ENCODE measurements at regions of chr3 and their contacts with region 1.

Region 1: DNA sequence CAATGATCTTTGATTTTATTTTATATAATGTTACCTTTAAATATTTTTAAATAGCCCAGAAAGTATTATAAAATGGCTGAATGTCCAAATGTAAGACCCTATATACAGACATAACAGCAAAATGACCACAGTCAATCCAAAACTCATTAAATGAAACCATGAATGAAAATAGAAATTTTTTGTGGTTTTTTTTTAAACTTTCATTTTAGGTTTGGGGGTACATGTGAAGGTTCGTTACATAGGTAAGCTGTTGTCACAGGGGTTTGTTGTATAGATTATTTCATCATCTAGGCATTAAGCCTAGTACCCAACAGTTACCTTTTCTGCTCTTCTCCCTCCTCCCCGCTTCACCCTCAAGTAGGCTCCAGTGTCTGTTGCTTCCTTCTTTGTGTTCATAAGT is 108.8 kb downstream of the FAIM start:
- DNase-seq: no peak
- H3K4me3 ChIP-seq: no peak overlapping the region
- H3K27ac ChIP-seq: no peak overlapping the region
- H3K4me1 ChIP-seq: no peaks in the 10 kb centered on the region
- H3K27me3 ChIP-seq: no peaks in the 10 kb centered on the region

Region 2: DNA sequence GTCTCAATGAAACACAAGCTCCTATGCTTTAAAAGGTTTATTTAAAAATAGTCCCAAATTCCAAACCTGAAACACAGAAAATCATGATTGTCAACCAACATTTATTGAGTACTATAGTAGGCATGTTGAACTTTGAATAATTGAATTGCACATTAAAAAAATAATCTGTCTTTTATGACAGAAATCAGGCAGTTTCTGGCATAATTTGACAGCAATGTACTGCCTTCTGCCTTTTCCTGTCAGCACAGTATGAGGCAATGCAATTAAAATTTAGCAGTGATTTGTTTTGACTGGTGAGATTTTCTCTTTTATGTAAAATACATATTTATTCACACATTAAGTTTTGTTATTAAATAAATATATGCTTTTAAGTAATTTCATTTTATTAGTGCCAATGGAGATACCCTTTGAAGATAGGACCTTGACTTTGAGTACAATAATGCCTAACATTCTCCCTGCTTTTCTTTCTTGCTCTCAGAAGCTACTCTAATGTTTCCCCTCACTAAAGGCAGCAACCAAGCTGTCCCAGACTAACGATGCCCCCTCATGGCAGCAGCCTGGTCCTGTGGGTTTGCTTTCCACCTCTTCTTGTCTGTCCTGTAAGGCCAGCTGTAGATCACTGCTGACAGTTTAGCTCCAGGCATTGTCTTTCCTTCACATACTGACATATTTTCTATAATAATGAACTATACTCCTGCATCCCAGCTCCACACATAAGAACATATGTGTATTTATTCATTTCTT is 1412.9 kb before region 1 on chr3:
- CTCF ChIA-PET with region 1: no interaction called
- POLR2A ChIA-PET with region 1: no interaction called
- DNase-seq: no peak
- H3K4me3 ChIP-seq: no peak overlapping the region
- H3K27ac ChIP-seq: no peak overlapping the region
- H3K4me1 ChIP-seq: no peaks in the 10 kb centered on the region
- H3K27me3 ChIP-seq: no peaks in the 10 kb centered on the region

Region 3: DNA sequence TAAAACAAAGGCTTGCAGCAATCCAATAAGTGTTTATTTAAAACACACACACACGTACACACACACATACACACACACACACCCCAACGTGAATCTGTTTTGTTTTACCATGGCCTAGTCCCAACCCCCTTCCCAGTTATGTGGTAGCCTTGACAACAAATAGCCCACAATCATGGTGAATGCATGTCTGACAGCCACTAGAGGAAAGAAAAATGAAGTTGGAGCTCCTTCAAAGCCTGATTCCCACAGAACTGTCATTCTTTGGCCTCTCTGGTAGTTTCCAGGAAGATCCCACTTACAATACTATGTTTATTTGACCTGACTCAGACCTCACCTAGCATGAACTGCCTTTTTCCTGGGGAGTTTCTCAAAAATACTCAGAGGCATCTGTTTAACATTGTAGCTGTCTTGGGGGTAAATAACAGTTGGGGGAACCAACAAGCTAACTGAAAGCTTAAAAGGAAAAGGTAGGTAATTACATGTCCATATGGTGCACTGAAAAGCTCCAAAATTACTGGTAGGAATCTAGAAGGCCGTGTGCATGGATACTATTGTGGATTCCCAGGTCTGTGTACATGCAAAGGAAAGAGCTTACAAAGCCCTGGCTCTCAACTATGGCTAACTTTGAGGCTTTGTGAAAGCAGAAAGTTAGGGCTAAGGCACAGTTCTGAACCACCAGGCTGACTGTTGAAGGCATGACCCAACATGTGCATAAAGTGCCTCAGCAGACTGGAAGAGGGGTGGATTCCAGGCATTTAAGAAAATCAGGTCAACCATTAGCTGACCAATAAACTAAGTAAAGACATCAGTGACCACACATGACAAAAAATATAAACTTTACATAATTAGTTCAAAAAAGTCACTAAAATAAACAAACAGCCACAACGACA is 43.5 kb before region 1 on chr3:
- CTCF ChIA-PET with region 1: no interaction called
- POLR2A ChIA-PET with region 1: no interaction called
- DNase-seq: peak in 1 of 3 donors; percentile 46
- H3K4me3 ChIP-seq: no peak overlapping the region
- H3K27ac ChIP-seq: no peak overlapping the region
- H3K4me1 ChIP-seq: peaks cover 0 to 16% (median 0%) of the 10 kb centered on the region in 4 experiments
- H3K27me3 ChIP-seq: no peaks in the 10 kb centered on the region

Region 4: GRCh38 chr3:138694287-138695007 is 22.9 kb before region 1 on chr3:
- CTCF ChIA-PET with region 1: interaction called, 12 read pairs
- POLR2A ChIA-PET with region 1: interaction called, 4 read pairs
- DNase-seq: peak in 2 of 3 donors; percentile 53
- H3K4me3 ChIP-seq: no peak overlapping the region
- H3K27ac ChIP-seq: no peak overlapping the region
- H3K4me1 ChIP-seq: peaks cover 0 to 7% (median 1%) of the 10 kb centered on the region in 4 experiments
- H3K27me3 ChIP-seq: no peaks in the 10 kb centered on the region